ENCODE measurements at regions of chr11 and their contacts with region 1.

Region 1: DNA sequence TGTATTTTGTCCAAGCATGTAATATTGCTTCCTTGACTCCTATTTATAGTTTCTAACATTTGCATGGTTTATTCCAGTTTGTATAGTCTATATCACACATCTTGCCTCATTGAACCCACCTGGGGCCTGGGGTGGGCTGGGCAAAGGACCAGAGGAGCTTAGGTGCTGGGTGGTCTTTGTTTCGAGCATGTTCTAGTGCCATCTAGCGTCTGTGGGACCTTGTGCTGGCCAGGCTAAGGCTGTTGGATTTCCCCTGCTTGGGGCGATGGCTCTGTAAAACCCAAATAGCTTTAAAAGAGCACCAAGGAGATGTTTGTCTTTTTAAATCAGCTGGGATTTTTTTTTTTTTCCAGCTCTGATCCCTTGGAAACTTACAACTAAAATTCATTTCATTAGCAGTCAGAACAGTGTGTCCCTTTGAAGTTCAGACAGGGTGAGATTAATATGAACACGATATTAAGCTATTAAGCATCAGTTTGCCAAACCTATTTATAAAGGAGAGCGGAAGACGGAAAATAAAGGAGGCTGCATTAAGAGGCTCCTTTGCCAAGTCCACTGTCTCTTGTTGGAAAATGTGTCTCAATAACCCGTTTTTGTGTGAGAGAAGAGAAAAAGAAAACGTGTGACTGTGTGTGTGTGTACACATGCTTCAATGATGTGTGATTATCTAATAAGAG is 157.4 kb downstream of the COMMD9 start:
- DNase-seq: no peak
- H3K4me3 ChIP-seq: no peak overlapping the region
- CTCF ChIP-seq: peak; percentile 76

Region 2: GRCh38 chr11:35709386-35709785 is 422.5 kb before region 1 on chr11:
- CTCF ChIA-PET with region 1: no interaction called
- POLR2A ChIA-PET with region 1: no interaction called
- DNase-seq: no peak
- H3K4me3 ChIP-seq: no peak overlapping the region
- CTCF ChIP-seq: no peak

Region 3: DNA sequence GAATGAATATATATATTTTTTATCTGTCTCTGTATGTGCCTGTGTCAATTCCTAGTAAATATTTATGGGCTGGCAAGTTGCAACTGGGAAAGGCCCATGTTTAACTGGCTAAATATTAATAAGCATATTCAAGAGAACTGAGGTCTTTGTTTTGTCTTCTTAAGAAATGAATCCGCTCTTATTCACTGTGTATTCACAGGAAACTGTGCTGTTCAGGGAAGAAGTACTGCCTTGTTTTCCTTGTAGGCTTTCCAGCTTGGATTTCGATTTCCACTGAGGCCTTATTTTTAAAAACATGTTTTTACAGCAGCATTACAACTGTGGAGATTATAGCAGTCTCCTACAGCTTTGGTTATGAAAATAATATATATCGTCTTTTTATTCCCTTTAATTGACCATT is 123.3 kb before region 1 on chr11:
- CTCF ChIA-PET with region 1: no interaction called
- POLR2A ChIA-PET with region 1: no interaction called
- DNase-seq: no peak
- H3K4me3 ChIP-seq: no peak overlapping the region
- CTCF ChIP-seq: no peak

Region 4: DNA sequence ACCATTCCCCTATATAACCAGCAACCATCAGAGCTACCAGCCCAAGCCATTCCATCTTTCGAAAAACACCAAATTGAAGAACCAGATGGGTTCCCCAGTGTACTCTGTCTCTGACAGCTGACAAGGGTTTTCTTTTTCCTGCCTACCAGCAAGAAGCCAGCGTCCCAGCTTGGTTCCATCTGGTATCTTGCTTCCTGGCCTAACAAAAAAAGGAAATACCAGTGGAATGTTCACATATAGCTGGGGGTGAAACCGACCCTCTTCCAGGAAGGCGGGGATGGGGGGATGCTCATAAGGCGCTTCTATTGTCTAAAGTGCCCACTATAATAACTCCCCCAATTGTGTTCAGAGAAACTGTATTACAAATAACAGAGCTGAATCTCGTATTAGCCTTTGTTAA is 15.7 kb before region 1 on chr11:
- CTCF ChIA-PET with region 1: interaction called, 15 read pairs
- POLR2A ChIA-PET with region 1: no interaction called
- DNase-seq: no peak
- H3K4me3 ChIP-seq: no peak overlapping the region
- CTCF ChIP-seq: no peak

Region 5: DNA sequence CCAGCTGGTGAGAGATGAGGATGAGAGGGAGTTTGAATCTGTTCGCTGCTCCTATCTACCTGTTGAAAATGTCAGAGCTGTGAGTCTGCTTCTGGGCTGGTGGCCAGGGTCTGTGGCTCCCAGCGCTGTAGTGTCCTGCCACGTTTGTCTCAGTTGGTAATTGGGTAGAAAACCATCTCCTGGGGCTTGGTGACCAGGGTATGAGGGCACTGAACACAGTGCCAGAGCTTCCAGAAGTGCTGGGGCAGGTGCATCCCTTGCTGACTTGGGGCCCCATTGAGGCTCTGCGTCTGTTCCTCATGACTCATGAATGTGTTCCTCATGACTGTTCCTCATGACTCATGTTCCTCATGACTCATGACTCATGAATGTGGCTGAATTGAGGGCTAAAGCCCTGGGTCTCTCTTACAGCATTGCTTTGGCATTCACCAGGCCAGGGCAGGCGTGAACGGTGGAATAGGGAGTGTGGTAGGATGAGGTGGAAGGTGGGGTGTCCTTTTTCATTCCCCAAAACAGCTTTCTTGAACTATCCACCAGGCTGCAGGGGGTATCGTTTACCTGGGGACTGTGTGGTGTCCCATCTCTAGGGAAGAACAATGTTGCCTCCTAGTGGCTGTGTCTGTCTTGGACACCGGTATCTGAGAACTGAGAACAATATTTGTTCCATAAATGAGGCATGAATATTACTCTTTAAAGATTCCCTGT is 17.8 kb after region 1 on chr11:
- CTCF ChIA-PET with region 1: interaction called, 14 read pairs
- POLR2A ChIA-PET with region 1: no interaction called
- DNase-seq: peak; percentile 88
- H3K4me3 ChIP-seq: no peak overlapping the region
- CTCF ChIP-seq: peak; percentile 41

Region 6: GRCh38 chr11:36156161-36156816 is 24.4 kb after region 1 on chr11:
- CTCF ChIA-PET with region 1: interaction called, 12 read pairs
- POLR2A ChIA-PET with region 1: no interaction called
- DNase-seq: no peak
- H3K4me3 ChIP-seq: no peak overlapping the region
- CTCF ChIP-seq: no peak

Region 7: DNA sequence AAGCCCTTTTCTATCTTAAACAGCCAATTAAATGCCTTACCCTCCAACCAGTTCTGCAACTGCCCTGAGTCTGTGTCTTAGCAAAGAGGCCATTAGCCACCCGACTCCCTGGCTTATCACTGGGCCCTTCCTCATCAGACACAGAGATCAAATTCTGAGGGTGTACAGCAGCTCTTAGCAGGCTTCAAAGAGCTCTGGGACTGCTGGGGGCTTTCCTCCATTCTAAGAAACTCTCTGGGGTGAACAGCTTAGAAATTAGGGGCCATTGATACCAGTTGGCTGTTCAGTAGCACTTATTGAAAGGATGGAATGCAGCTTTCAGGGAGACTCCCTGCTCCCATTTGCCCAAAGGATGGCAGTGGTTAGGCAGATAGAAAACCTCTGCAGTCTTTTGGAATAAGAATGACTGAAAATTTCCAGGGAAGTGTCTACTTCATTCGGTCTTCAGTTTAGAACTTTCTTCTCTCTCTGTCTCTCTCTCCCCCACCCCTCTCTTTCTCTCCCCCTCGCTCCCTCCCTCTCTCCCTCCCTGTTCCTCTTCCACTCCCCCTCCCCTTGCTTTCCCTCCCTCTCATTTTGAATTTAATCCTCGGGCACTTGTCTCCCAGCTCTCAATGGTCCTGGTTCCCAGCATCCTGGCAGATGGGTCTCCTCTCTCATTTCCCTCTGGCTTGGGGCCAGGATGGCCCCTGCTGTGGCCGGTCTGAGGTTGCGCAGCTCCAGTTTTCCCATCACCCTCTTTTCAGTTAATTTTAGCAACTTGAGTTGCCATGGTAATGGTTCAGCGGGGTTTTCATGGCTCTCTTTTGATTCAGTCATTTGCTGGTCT is 80.9 kb after region 1 on chr11:
- CTCF ChIA-PET with region 1: no interaction called
- POLR2A ChIA-PET with region 1: no interaction called
- DNase-seq: no peak
- H3K4me3 ChIP-seq: no peak overlapping the region
- CTCF ChIP-seq: no peak

Measured in AG04449 (cell line).